ENCODE measurements at regions of chr9 and their contacts with region 1.

Region 1: DNA sequence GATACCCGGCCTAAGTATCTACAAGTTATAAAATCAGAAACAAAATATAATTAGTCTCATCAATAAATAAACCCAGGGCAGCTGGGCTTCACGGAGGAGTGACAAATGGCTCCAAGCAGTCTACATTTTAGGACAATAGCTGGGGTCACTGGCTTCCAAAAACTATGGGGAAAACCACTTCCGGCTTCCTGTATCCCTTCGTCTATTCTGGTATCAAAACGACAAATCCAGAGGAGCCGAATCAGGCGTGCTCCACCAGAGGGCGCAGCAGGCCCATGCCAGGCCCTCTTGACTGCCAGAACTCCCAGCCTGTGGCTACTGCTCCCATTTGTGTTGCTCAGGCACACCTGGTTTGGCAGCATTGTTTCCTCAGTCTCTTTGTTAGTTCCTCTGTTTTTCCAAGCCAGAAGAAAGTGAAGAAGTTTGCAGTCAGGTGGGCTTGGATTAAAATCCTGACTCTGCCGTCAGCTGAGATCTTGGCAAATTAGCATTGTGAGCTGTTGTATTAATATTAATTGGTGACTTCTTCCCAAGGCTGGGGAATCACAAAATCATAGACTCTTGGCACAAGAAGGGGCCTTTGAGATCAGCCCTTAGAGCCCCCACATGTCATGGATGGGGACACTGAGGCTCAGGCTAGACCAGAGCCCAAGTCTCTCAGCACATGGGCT is 11.6 kb upstream of the RAB14 start:
- DNase-seq: peak; percentile 84
- H3K4me3 ChIP-seq: no peak overlapping the region
- H3K27ac ChIP-seq: no peak overlapping the region
- H3K4me1 ChIP-seq: peaks cover 5% of the 10 kb centered on the region
- H3K27me3 ChIP-seq: no peaks in the 10 kb centered on the region
- CTCF ChIP-seq: peak; percentile 96 to 98
- POLR2A ChIP-seq: no peak

Region 2: DNA sequence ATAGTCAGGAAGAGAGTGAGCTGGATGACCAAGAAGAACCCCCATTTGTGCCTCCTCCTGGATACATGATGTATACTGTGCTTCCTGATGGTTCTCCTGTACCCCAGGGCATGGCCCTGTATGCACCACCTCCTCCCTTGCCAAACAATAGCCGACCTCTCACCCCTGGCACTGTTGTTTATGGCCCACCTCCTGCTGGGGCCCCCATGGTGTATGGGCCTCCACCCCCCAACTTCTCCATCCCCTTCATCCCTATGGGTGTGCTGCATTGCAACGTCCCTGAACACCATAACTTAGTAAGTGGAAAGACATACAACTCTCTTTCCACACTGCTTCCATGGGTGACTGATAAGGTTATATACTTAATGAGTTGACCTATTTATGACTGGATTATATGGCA is 63.1 kb before region 1 on chr9:
- CTCF ChIA-PET with region 1: no interaction called
- POLR2A ChIA-PET with region 1: no interaction called
- dilution Hi-C with region 1: no loop called
- intact Hi-C with region 1: no loop called
- DNase-seq: no peak
- H3K4me3 ChIP-seq: no peak overlapping the region
- H3K27ac ChIP-seq: no peak overlapping the region
- H3K4me1 ChIP-seq: no peaks in the 10 kb centered on the region
- H3K27me3 ChIP-seq: no peaks in the 10 kb centered on the region
- CTCF ChIP-seq: no peak
- POLR2A ChIP-seq: no peak

Region 3: DNA sequence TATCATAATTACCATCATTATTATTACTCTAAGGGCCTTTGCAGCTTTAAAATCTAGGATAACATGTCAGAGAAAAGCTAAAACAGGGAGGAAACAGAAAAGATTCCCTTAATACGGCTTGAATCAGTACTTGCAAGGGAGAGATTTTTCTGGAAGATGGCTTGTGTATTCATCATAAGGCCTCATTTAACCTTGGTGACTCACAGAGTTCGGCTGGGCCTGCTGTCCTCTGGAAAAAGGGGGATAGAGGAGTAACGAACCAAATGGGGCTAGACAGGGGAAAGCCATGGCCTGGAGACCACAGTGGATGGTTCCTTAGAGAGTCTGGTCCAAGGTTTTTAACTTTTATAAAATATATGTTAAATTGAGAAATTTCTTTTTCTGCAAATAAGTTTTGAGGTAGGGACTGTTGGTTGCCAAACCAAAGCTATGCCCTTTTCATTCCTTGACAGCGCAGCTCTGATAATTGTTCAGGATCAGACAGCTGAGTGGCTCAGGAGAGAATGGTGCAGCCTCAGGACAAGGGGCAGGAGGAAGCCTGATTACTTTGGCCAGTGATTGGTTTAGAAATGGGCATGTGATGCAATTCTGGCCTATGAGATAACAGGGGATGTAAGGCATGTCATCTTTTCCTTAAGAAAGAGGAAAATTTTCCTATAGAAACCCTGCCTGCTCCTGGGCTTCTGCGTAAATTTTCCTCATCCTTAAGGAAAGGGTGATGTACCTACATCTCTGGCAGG is 29.1 kb after region 1 on chr9:
- CTCF ChIA-PET with region 1: no interaction called
- POLR2A ChIA-PET with region 1: no interaction called
- dilution Hi-C with region 1: no loop called
- intact Hi-C with region 1: no loop called
- DNase-seq: no peak
- H3K4me3 ChIP-seq: no peak overlapping the region
- H3K27ac ChIP-seq: no peak overlapping the region
- H3K4me1 ChIP-seq: no peaks in the 10 kb centered on the region
- H3K27me3 ChIP-seq: peaks cover 0 to 3% of the 10 kb centered on the region in 2 experiments
- CTCF ChIP-seq: no peak
- POLR2A ChIP-seq: no peak

Region 4: DNA sequence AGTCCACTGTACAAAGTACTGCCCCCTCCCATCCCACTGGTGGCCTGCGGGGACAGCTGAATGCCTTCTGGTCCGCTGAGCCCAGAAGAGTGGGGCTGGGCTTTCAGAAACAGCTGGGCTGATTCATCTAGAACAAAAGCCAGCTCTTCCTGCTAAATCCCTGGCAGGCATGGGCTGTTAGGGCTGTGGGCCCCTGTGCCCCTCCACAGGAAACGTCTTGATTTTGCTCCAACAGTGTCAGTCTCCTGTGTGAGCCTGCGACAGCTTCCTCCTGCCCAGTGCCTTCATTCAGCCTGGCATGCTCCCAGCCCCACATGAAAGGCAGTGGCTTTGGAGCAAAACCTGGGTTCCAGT is 47.8 kb after region 1 on chr9:
- CTCF ChIA-PET with region 1: interaction called, 11 read pairs
- POLR2A ChIA-PET with region 1: no interaction called
- dilution Hi-C with region 1: no loop called
- intact Hi-C with region 1: no loop called
- DNase-seq: peak; percentile 63
- H3K4me3 ChIP-seq: no peak overlapping the region
- H3K27ac ChIP-seq: peak overlapping the region; percentile 13
- H3K4me1 ChIP-seq: peaks cover 17% of the 10 kb centered on the region
- H3K27me3 ChIP-seq: peaks cover 0 to 5% of the 10 kb centered on the region in 2 experiments
- CTCF ChIP-seq: no peak
- POLR2A ChIP-seq: no peak

Region 5: DNA sequence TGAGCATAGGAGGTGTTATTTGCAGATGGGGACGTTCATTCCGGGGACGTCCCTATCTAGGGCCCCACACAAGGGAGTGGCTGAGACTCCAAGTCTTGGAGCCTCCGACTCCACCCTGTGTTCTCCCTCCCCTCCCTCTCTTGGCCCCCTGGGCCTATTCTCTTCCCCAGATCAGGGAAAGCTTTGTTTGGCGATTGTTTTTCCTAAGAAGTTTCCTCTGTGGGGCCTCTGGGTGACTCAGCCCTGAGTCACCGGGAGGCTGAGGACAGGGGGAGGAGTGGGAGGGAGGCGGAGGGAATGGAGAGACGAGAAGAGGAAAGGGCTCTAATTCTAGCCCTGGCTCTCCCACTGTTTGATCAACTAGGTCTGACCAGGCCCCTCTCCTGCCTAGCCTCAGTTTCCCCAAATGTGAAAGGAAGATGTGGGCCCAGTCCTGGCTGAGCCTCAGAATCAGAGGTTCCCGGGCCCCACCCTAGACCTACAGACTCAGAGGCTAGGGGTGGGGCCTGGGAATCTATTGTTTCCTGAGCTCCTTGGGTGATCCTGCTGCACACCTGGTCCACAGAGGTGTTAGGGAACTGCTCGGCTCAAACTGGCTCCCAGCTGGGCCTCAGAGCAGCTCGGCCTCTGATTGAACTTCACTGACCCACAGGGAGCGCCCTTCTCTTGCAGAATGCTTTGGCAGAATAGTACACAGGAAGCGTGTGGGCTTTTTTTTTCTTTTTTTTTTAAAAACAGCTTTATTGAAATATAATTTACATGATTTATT is 73.9 kb after region 1 on chr9:
- CTCF ChIA-PET with region 1: interaction called, 21 read pairs
- POLR2A ChIA-PET with region 1: no interaction called
- dilution Hi-C with region 1: no loop called
- intact Hi-C with region 1: loop called (anchors 1 kb)
- DNase-seq: peak; percentile 98
- H3K4me3 ChIP-seq: peak overlapping the region in 1 of 3 experiments; percentile 20
- H3K27ac ChIP-seq: peak overlapping the region; percentile 93
- H3K4me1 ChIP-seq: peaks cover 64% of the 10 kb centered on the region
- H3K27me3 ChIP-seq: no peaks in the 10 kb centered on the region
- CTCF ChIP-seq: peak; percentile 23 to 24
- POLR2A ChIP-seq: no peak

Region 6: DNA sequence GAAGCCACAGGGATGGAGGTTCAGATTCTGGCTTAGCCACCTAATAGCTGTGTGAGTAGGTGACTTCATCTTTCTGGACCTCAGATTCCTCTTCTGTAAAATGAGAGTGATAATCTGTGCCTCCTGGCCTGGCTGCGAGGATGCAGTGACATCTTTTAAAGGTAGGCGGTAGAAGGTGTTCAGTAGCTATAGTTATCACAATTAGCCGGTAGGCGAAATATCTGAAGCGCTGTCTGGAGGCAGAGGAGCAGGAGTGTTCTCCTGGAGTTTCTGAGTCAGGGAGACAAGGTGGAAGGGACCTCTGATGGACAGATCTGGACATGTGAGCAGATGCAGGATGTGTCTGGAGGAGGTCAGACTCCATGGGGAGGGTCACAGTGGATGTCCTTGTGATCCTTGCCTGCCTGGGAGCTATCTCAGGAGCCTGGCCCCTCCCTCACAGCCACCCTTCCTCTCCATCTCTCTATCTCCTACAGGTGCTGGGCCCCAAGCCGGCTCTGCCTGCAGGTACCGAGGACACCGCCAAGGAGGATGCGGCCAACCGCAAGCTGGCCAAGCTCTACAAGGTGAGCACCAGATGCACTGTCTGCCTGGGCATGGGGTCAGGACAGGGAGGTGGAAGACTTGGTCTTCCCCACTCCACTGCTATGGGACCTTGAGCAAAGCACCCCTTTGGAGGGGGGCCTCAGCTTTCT is 100.3 kb after region 1 on chr9:
- CTCF ChIA-PET with region 1: interaction called, 23 read pairs
- POLR2A ChIA-PET with region 1: no interaction called
- dilution Hi-C with region 1: no loop called
- intact Hi-C with region 1: no loop called
- DNase-seq: no peak
- H3K4me3 ChIP-seq: no peak overlapping the region
- H3K27ac ChIP-seq: no peak overlapping the region
- H3K4me1 ChIP-seq: no peaks in the 10 kb centered on the region
- H3K27me3 ChIP-seq: no peaks in the 10 kb centered on the region
- CTCF ChIP-seq: no peak
- POLR2A ChIP-seq: no peak

Region 7: GRCh38 chr9:121399883-121400607 is 186.8 kb after region 1 on chr9:
- CTCF ChIA-PET with region 1: interaction called, 83 read pairs
- POLR2A ChIA-PET with region 1: no interaction called
- dilution Hi-C with region 1: no loop called
- intact Hi-C with region 1: loop called (anchors 1 kb)
- DNase-seq: peak; percentile 82
- H3K4me3 ChIP-seq: no peak overlapping the region
- H3K27ac ChIP-seq: no peak overlapping the region
- H3K4me1 ChIP-seq: peaks cover 21% of the 10 kb centered on the region
- H3K27me3 ChIP-seq: no peaks in the 10 kb centered on the region
- CTCF ChIP-seq: peak; percentile 25 to 35
- POLR2A ChIP-seq: no peak

Measured in endothelial cell of umbilical vein (primary cell).